Activated CD4-positive, alpha-beta memory T cell treated with anti-CD3 and anti-CD28 coated beads for 36 hours (primary cell): ENCODE measurements at regions of chr5 and their contacts with region 1.

Region 1: DNA sequence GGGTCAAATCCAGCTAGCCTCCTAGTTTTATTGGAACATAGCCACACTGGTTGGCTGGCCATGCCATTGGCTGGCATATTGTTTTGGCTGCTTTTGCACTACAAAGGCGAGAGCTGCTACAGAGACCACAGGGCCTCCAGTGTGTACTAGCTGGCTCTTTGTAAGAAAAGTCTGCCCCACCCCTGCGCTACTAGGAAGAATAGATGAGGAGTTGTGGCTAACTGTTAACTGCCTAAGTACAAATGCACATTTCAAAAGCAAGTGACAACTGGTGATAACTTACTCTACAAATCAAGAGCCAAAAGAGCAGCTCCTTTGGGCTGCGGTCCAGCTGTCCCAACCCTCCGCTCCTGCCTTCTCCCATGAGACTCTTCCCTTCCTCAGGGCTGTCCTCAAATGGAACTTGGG is 63.9 kb downstream of the SERINC5 start:
- DNase-seq: peak; percentile 63
- H3K4me3 Mint-ChIP-seq: peak overlapping the region; percentile 61
- H3K27ac Mint-ChIP-seq: peak overlapping the region; percentile 92
- H3K4me1 Mint-ChIP-seq: peaks cover 78% of the 10 kb centered on the region
- H3K27me3 Mint-ChIP-seq: no peaks in the 10 kb centered on the region

Region 2: GRCh38 chr5:80026841-80027240 is 165.2 kb before region 1 on chr5:
- CTCF ChIA-PET with region 1: no interaction called
- POLR2A ChIA-PET with region 1: no interaction called
- intact Hi-C with region 1: no loop called
- DNase-seq: no peak
- H3K4me3 Mint-ChIP-seq: no peak overlapping the region
- H3K27ac Mint-ChIP-seq: no peak overlapping the region
- H3K4me1 Mint-ChIP-seq: no peaks in the 10 kb centered on the region
- H3K27me3 Mint-ChIP-seq: peaks cover 12% of the 10 kb centered on the region

Region 3: GRCh38 chr5:80141147-80141671 is 50.8 kb before region 1 on chr5:
- CTCF ChIA-PET with region 1: interaction called, 3 read pairs
- POLR2A ChIA-PET with region 1: interaction called, 7 read pairs
- intact Hi-C with region 1: loop called (anchors 2 kb)
- DNase-seq: no peak
- H3K4me3 Mint-ChIP-seq: peak overlapping the region; percentile 40
- H3K27ac Mint-ChIP-seq: peak overlapping the region; percentile 87
- H3K4me1 Mint-ChIP-seq: peaks cover 77% of the 10 kb centered on the region
- H3K27me3 Mint-ChIP-seq: no peaks in the 10 kb centered on the region

Region 4: DNA sequence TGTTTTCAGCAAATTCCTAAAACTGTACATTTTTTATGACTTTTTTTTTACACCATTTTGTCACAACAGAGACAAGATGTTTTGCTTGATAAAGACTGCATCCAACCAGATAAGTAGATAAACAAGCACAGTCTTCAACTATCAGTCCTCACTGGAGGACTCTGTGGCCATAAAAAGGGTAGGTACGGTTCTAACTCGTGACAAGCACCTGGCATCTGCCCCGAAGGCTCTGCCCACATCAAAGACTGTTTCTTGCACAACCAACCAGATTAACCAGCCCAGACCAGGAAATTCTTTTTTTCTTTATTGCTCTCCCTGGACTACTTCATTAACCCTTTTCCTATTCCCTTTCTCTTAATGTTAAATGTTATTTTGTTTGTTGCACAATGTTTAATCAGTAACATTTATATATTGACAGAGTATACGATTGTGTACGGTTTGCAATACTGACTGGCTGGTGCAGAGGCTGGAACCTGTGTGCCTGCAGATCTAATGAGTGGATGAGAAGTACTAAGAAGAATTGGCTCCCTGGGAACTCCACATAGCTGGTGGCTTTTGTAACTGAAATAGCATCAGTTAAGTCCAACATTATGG is 10.3 kb before region 1 on chr5:
- CTCF ChIA-PET with region 1: interaction called, 4 read pairs
- POLR2A ChIA-PET with region 1: interaction called, 4 read pairs
- intact Hi-C with region 1: loop called (anchors 1 kb)
- DNase-seq: peak; percentile 68
- H3K4me3 Mint-ChIP-seq: peak overlapping the region; percentile 59
- H3K27ac Mint-ChIP-seq: peak overlapping the region; percentile 81
- H3K4me1 Mint-ChIP-seq: peaks cover 84% of the 10 kb centered on the region
- H3K27me3 Mint-ChIP-seq: no peaks in the 10 kb centered on the region

Region 5: GRCh38 chr5:80216753-80217596 is 25.0 kb after region 1 on chr5:
- CTCF ChIA-PET with region 1: interaction called, 5 read pairs
- POLR2A ChIA-PET with region 1: interaction called, 6 read pairs
- intact Hi-C with region 1: loop called (anchors 1 kb)
- DNase-seq: peak; percentile 64
- H3K4me3 Mint-ChIP-seq: peak overlapping the region; percentile 73
- H3K27ac Mint-ChIP-seq: peak overlapping the region; percentile 91
- H3K4me1 Mint-ChIP-seq: peaks cover 85% of the 10 kb centered on the region
- H3K27me3 Mint-ChIP-seq: no peaks in the 10 kb centered on the region